ENCODE measurements at regions of chr5 and their contacts with region 1.

Region 1: GRCh38 chr5:139262742-139263445 is 30.6 kb upstream of the MATR3 start:
- DNase-seq: peak; percentile 94
- H3K4me3 Mint-ChIP-seq: no peak overlapping the region
- H3K27ac Mint-ChIP-seq: no peak overlapping the region
- H3K4me1 Mint-ChIP-seq: peaks cover 11% of the 10 kb centered on the region
- H3K27me3 Mint-ChIP-seq: no peaks in the 10 kb centered on the region
- CTCF ChIP-seq: peak; percentile 99

Region 2: GRCh38 chr5:138464008-138464387 is 798.9 kb before region 1 on chr5:
- CTCF ChIA-PET with region 1: no interaction called
- POLR2A ChIA-PET with region 1: no interaction called
- intact Hi-C with region 1: loop called (anchors 5 kb)
- DNase-seq: peak; percentile 98
- H3K4me3 Mint-ChIP-seq: peak overlapping the region; percentile 78
- H3K27ac Mint-ChIP-seq: peak overlapping the region; percentile 93
- H3K4me1 Mint-ChIP-seq: peaks cover 45% of the 10 kb centered on the region
- H3K27me3 Mint-ChIP-seq: peaks cover 20% of the 10 kb centered on the region
- CTCF ChIP-seq: peak; percentile 97

Region 3: GRCh38 chr5:138752951-138753793 is 509.7 kb before region 1 on chr5 and contains the start of gene CTNNA1:
- CTCF ChIA-PET with region 1: interaction called, 5 read pairs
- POLR2A ChIA-PET with region 1: no interaction called
- intact Hi-C with region 1: loop called (anchors 10 kb)
- DNase-seq: peak; percentile 89
- H3K4me3 Mint-ChIP-seq: peak within 1 kb of the TSS; percentile 87
- H3K27ac Mint-ChIP-seq: peak within 1 kb of the TSS; percentile 94
- H3K4me1 Mint-ChIP-seq: peaks cover 49% of the 10 kb centered on the region
- H3K27me3 Mint-ChIP-seq: no peaks in the 10 kb centered on the region
- CTCF ChIP-seq: no peak
- total RNA-seq, gene CTNNA1: 519 and 638 TPM in 2 replicates

Region 4: GRCh38 chr5:138819081-138819480 is 443.8 kb before region 1 on chr5:
- CTCF ChIA-PET with region 1: interaction called, 41 read pairs
- POLR2A ChIA-PET with region 1: no interaction called
- intact Hi-C with region 1: no loop called
- DNase-seq: no peak
- H3K4me3 Mint-ChIP-seq: no peak overlapping the region
- H3K27ac Mint-ChIP-seq: peak overlapping the region; percentile 21
- H3K4me1 Mint-ChIP-seq: peaks cover 12% of the 10 kb centered on the region
- H3K27me3 Mint-ChIP-seq: no peaks in the 10 kb centered on the region
- CTCF ChIP-seq: no peak

Region 5: DNA sequence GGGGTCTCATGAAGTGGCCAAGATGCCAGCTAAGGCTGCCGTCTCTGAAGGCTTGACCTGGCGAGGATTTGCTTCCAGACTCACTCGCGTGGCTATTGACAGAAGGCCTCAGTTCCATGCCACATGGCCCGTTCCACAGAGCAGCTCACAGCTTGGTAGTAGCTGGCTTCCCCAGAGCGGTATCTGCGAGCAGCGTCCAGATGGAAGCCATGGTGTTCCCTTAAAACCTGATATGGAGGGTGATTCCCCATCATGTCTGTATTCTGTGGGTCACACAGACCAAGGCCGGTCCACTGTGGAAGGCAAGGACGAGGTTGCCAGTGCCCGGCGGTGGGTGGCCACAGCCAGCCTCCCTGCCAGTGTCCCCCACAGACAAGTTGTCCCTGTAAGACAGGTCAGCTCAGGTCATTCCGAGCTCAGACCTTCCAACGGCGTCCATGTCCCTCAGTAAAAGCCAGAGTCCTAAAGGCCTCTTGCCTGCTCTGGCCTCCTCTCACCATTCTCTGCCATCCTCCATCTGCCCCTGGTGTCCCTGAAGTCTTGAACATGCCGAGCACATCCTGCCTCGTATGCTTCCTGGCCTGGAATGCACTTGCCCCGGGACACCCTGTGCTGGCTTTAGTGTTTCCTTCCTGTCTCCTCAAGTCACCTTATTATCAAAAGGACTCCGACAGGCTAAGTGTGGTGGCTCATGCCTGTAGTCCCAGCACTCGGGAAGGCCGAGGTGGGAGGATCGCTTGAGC is 326.5 kb before region 1 on chr5:
- CTCF ChIA-PET with region 1: interaction called, 3 read pairs
- POLR2A ChIA-PET with region 1: interaction called, 3 read pairs
- intact Hi-C with region 1: loop called (anchors 5 kb)
- DNase-seq: no peak
- H3K4me3 Mint-ChIP-seq: no peak overlapping the region
- H3K27ac Mint-ChIP-seq: peak overlapping the region; percentile 10
- H3K4me1 Mint-ChIP-seq: no peaks in the 10 kb centered on the region
- H3K27me3 Mint-ChIP-seq: no peaks in the 10 kb centered on the region
- CTCF ChIP-seq: no peak

Region 6: GRCh38 chr5:139273572-139274289 is 10.8 kb after region 1 on chr5:
- CTCF ChIA-PET with region 1: interaction called, 7 read pairs
- POLR2A ChIA-PET with region 1: interaction called, 10 read pairs
- intact Hi-C with region 1: no loop called
- DNase-seq: peak; percentile 95
- H3K4me3 Mint-ChIP-seq: peak overlapping the region; percentile 74
- H3K27ac Mint-ChIP-seq: peak overlapping the region; percentile 65
- H3K4me1 Mint-ChIP-seq: peaks cover 49% of the 10 kb centered on the region
- H3K27me3 Mint-ChIP-seq: no peaks in the 10 kb centered on the region
- CTCF ChIP-seq: peak; percentile 10

Region 7: DNA sequence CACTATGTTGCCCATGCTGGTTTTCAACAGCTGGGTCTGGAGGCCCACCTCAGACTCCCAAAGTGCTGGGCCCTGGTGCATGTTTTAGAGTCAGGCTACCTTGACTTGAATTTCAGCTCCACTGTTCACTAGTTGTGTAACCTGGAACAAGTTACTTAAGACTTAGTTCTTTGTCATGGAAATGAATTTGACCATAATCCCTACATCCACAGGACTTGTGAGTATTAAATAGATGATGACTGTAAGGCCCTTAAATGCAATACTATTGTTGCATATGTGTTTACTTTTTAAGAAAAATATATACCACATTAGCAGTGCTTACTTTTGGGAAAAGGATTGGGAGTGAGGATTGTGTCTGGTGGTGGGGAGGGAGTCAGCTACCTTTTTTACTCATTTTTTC is 95.2 kb after region 1 on chr5:
- CTCF ChIA-PET with region 1: no interaction called
- POLR2A ChIA-PET with region 1: no interaction called
- intact Hi-C with region 1: no loop called
- DNase-seq: no peak
- H3K4me3 Mint-ChIP-seq: no peak overlapping the region
- H3K27ac Mint-ChIP-seq: peak overlapping the region; percentile 61
- H3K4me1 Mint-ChIP-seq: peaks cover 15% of the 10 kb centered on the region
- H3K27me3 Mint-ChIP-seq: no peaks in the 10 kb centered on the region
- CTCF ChIP-seq: no peak

Measured in MCF 10A (cell line).